Calu3 (cell line): ENCODE measurements at regions of chr1 and their contacts with region 1.

Region 1: DNA sequence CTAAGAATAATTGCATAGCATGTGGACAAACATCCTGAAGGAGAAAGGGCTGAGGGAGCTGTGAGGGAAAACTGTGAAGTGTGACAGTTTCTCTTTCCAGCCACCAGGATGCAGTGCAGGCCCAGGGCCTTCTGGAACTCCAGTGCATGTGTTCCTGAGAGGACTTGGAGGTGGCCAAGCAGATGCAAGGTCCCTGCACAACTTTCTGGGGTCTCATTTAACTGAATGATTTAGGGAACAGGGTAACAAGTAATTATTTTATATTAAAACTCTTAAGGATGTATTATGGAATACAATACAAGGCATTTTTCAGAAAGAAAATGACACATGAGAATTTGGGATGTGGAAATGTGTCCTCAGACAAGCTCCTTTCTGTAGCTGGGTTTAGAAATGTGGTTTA is 61.2 kb upstream of the MCOLN3 start:
- DNase-seq: peak; percentile 58
- H3K4me3 Mint-ChIP-seq: no peak overlapping the region
- H3K27ac Mint-ChIP-seq: no peak overlapping the region
- H3K4me1 Mint-ChIP-seq: no peaks in the 10 kb centered on the region
- H3K27me3 Mint-ChIP-seq: no peaks in the 10 kb centered on the region
- CTCF ChIP-seq: peak; percentile 86

Region 2: GRCh38 chr1:85230305-85230980 is 121.0 kb after region 1 on chr1:
- CTCF ChIA-PET with region 1: interaction called, 10 read pairs
- intact Hi-C with region 1: no loop called
- DNase-seq: peak; percentile 19
- H3K4me3 Mint-ChIP-seq: peak overlapping the region; percentile 6
- H3K27ac Mint-ChIP-seq: peak overlapping the region; percentile 19
- H3K4me1 Mint-ChIP-seq: peaks cover 19% of the 10 kb centered on the region
- H3K27me3 Mint-ChIP-seq: no peaks in the 10 kb centered on the region
- CTCF ChIP-seq: peak; percentile 56

Region 3: DNA sequence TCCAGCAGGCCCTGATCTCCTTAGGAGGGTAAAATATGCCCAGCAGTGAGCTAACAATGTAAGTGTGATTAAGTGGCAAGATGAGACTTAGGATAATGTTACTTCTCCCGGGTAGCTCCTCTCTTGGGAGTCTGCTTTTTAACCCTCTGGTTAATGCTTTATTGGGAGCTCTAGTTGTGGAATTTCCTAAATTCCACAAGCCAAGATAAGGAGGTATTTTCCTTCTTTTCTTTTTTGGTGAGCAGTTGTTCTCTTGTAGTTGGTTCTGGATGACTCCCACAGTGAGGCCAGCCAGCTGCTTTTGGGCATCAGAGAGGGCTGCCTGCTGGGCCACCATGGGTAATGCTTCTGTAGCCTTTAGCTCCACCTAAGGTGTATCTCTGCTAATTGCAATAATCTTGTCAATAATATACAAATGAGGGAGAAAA is 130.7 kb after region 1 on chr1:
- CTCF ChIA-PET with region 1: interaction called, 23 read pairs
- intact Hi-C with region 1: loop called (anchors 1 kb)
- DNase-seq: peak; percentile 26
- H3K4me3 Mint-ChIP-seq: no peak overlapping the region
- H3K27ac Mint-ChIP-seq: no peak overlapping the region
- H3K4me1 Mint-ChIP-seq: no peaks in the 10 kb centered on the region
- H3K27me3 Mint-ChIP-seq: no peaks in the 10 kb centered on the region
- CTCF ChIP-seq: no peak